Right lobe of liver (tissue), 6 donors: ENCODE measurements at regions of chr17 and their contacts with region 1.

Region 1: DNA sequence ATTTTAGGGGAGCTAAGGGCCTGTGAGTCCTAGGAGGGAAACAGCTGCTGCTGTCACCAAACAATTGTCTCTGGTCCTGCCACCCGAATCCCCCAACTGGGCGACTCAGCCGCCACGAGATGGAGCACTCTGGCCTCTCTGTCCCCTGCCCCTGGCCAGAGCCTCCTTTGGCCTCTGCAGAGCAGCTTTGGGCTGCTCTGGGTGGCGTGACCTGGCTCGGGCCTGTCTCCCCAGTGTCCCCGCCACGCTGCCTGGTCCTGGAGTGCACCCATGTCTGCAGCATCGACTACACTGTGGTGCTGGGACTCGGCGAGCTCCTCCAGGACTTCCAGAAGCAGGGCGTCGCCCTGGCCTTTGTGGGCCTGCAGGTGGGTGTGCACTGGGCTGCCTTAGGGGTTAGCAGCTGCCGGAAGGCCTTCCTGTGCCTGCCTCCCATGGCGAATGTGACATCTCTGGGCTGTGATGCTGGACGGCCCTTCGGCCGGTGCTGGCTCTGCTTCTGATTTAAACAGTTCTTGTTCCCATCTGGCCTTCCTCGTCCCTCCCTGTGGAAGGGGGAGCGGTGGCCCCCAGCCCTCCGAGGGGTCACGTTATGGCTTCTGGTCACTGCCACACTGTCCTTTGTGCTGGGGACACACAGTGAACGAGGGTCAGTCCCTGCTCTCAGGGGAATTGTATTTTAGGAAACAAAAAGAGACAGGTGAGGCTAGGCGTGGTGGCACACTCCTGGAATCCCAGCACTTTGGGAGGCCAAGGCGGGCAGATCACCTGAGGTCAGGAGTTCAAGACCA is 11.5 kb upstream of the RNF213 start:
- DNase-seq: no peak
- ATAC-seq: no peak
- H3K4me3 ChIP-seq: no peak overlapping the region
- H3K27ac ChIP-seq: no peak overlapping the region
- H3K4me1 ChIP-seq: no peaks in the 10 kb centered on the region
- H3K27me3 ChIP-seq: no peaks in the 10 kb centered on the region
- CTCF ChIP-seq: no peak
- POLR2A ChIP-seq: no peak

Region 2: GRCh38 chr17:80092959-80093358 is 156.2 kb before region 1 on chr17:
- intact Hi-C with region 1: loop called (anchors 10 kb)
- DNase-seq: no peak
- ATAC-seq: peak; percentile 43 to 76 (median 64)
- H3K4me3 ChIP-seq: no peak overlapping the region
- H3K27ac ChIP-seq: peak overlapping the region in 2 of 3 donors; percentile 38 to 55
- H3K4me1 ChIP-seq: no peaks in the 10 kb centered on the region
- H3K27me3 ChIP-seq: no peaks in the 10 kb centered on the region
- CTCF ChIP-seq: no peak
- POLR2A ChIP-seq: no peak

Region 3: DNA sequence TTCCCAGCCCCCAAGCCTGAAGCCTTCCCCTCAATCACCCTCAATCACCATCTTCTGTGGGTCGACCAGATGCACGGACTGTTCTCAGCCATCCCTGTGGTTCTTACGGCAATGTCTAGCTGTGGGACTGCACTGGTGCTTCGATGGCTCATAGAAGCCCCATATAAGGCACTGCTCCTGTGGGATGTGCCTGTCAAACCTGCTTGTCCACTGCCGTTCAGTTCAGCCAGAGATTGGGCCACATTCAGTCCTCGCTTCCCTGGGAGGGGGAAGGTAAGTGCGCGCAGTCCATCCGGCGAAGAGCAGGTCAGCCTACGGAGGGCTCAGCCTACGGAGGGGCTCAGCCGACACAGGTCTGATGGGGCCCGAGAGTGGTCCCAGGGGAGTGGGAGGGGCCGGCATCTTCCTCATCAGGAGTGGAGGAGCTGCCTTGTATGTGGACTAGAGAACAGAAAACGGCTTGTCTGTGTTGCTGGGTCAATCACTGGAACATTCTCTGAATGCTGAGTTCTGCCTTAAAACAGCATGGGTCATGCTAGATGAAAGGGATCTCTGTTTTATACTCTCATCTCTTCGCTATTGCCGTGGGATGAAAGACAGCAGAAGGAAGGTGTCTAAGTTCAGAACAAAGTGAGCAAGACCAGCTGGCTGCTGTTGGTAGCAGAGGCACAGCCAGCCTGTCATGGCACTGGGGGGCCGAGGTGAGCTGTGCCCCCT is 79.2 kb before region 1 on chr17 and contains the start of gene CARD14:
- intact Hi-C with region 1: no loop called
- DNase-seq: no peak
- ATAC-seq: peak in 1 of 4 donors; percentile 11
- H3K4me3 ChIP-seq: no peak within 1 kb of the TSS
- H3K27ac ChIP-seq: no peak within 1 kb of the TSS
- H3K4me1 ChIP-seq: no peaks in the 10 kb centered on the region
- H3K27me3 ChIP-seq: no peaks in the 10 kb centered on the region
- CTCF ChIP-seq: no peak
- POLR2A ChIP-seq: no peak
- total RNA-seq, gene CARD14: 0.20 to 0.29 (median 0.22) TPM in 3 of 6 experiments, not detected in the others